ENCODE measurements at regions of chr3 and their contacts with region 1.

Region 1: DNA sequence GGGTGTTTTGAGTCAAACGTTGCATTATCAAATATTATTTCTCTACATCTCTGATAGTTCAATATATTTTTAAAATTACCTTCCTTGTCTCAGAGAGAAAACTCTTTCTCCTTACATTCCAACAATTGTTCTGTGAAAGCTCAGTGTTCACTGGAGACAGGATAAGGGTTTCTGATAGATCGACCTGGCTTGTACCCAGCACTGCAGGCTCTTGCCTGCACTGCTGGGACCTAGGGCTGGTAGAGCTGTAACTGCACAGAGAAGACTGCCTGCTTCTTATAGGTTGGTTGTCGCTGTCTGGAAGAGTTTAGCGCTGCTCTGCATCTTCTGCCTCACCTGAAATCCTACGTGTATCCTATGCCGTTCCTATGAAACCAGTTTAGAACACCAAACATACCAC is 249.9 kb upstream of the LRTM1 start:
- DNase-seq: no peak
- ATAC-seq: no peak

Region 2: GRCh38 chr3:54853573-54854404 is 324.0 kb before region 1 on chr3:
- intact Hi-C with region 1: loop called (anchors 5 kb)
- DNase-seq: peak; percentile 85
- ATAC-seq: peak; percentile 95

Measured in left ventricle myocardium superior (tissue), 1 donor.